Activated CD4-positive, alpha-beta T cell treated with anti-CD3 and anti-CD28 coated beads, Interleukin-2, amount 10 ng/mL, durations not matched to agents 24 days and 14 days (primary cell): ENCODE measurements at regions of chr13 and their contacts with region 1.

Region 1: DNA sequence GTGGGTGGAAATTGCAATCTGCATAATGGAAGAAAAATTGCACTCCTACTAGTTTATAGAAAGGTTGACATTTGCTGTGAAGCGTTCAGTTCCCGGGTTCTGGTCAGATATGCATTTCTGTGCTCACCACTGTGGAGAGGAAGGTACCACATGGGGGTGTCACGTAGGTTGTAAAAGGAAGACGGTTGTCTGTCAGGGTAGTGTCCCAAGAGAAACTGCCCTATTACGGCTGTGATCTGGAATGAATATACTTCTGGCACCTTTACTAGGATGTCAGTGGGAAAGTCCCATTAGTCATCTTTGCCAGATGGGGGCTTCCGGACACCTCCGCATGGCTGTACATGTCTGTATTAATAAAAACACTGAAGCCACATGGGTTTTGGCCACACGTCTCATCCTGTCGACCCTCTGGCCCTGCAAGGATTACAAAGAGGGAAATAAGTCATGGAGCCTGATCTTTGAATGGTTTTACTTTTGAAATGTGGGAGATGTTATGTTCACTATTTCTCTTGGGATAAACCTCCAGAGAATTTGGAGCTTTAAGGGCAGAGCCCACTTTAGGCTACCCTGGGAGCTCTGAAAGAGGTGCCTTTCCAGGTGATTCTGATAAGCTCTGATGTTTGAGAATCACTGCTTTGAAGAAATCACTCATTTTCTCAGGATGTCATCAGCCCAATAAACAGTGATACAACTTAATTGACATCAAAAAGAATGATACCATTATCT is 133.9 kb downstream of the AKAP11 start:
- DNase-seq: peak; percentile 81
- H3K4me3 Mint-ChIP-seq: peak overlapping the region; percentile 51
- H3K27ac Mint-ChIP-seq: peak overlapping the region; percentile 95
- H3K4me1 Mint-ChIP-seq: peaks cover 58% of the 10 kb centered on the region
- H3K27me3 Mint-ChIP-seq: no peaks in the 10 kb centered on the region

Region 2: DNA sequence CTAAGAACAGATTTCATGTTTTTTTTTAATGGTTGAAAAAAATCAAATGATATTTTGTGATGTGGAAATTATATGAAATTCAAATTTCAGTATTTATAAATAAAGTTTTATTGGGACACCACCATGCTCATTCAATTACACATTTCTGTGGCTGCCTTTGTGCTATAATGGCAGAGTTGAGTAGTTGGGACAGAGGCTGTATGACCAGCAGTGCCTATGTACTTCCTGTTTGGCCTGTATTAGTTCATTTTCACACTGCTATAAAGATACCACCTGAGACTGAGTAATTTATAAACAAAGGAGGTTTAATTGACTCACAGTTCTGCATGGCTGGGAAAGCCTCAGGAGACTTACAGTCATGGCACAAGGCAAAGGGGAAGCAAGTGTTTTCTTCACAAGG is 100.3 kb before region 1 on chr13:
- intact Hi-C with region 1: no loop called
- DNase-seq: no peak
- H3K4me3 Mint-ChIP-seq: no peak overlapping the region
- H3K27ac Mint-ChIP-seq: no peak overlapping the region
- H3K4me1 Mint-ChIP-seq: peaks cover 10% of the 10 kb centered on the region
- H3K27me3 Mint-ChIP-seq: no peaks in the 10 kb centered on the region

Region 3: GRCh38 chr13:42354241-42355091 is 51.4 kb before region 1 on chr13:
- intact Hi-C with region 1: loop called (anchors 1 kb)
- DNase-seq: peak; percentile 80
- H3K4me3 Mint-ChIP-seq: peak overlapping the region; percentile 77
- H3K27ac Mint-ChIP-seq: peak overlapping the region; percentile 99
- H3K4me1 Mint-ChIP-seq: peaks cover 54% of the 10 kb centered on the region
- H3K27me3 Mint-ChIP-seq: no peaks in the 10 kb centered on the region

Region 4: DNA sequence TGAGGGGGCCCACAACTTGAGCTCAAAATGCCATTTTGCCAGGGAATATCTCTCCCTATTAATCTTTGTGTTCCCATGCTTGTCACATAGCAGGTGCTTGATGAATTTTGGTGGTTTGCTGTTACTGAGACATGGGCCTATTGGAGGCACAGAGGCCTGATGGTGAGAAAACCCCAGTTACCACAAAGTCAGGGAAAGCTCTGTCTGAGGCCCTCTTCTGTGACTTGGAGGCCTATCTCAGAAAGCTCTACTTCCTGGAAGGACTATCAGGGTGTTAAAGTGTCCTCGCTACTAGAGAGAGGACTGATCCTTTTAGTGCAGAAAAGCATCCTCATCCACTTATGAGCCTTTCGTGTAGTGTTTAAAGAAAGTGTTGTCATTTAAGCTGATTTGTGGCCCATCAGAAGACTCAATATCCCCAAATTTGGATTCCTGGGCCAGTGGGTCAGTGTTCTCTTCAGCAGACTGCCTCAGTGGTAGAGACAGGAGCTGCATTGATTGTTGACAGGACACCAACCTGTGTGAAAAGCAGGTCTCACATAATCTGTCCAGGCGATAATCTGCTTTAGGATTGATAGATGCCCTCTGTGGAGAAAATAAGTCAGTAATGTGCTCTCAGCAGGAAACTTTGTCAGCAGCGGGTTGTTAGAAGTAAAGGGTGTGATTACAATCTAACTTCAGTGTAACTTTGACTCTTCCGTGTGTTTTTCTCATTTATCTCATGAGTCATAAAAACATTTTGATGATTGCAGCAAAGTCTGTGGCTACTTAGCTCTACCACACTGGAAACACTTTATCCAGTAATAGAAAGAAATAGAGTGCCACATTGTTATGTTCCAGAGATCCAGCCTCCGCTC is 12.9 kb before region 1 on chr13:
- intact Hi-C with region 1: loop called (anchors 1 kb)
- DNase-seq: peak; percentile 86
- H3K4me3 Mint-ChIP-seq: peak overlapping the region; percentile 91
- H3K27ac Mint-ChIP-seq: peak overlapping the region; percentile 97
- H3K4me1 Mint-ChIP-seq: peaks cover 76% of the 10 kb centered on the region
- H3K27me3 Mint-ChIP-seq: no peaks in the 10 kb centered on the region

Region 5: GRCh38 chr13:42420304-42420703 is 14.5 kb after region 1 on chr13:
- intact Hi-C with region 1: loop called (anchors 1 kb)
- DNase-seq: peak; percentile 71
- H3K4me3 Mint-ChIP-seq: peak overlapping the region; percentile 10
- H3K27ac Mint-ChIP-seq: peak overlapping the region; percentile 66
- H3K4me1 Mint-ChIP-seq: peaks cover 39% of the 10 kb centered on the region
- H3K27me3 Mint-ChIP-seq: no peaks in the 10 kb centered on the region

Region 6: GRCh38 chr13:42478531-42479156 is 72.8 kb after region 1 on chr13:
- intact Hi-C with region 1: loop called (anchors 5 kb)
- DNase-seq: peak; percentile 67
- H3K4me3 Mint-ChIP-seq: no peak overlapping the region
- H3K27ac Mint-ChIP-seq: no peak overlapping the region
- H3K4me1 Mint-ChIP-seq: peaks cover 18% of the 10 kb centered on the region
- H3K27me3 Mint-ChIP-seq: no peaks in the 10 kb centered on the region